Esophagus squamous epithelium (tissue), 5 donors: ENCODE measurements at regions of chr9 and their contacts with region 1.

Region 1: GRCh38 chr9:33623658-33624586 is 99.9 kb downstream of the ANKRD18B start:
- DNase-seq: no peak
- H3K4me3 ChIP-seq: no peak overlapping the region
- H3K27ac ChIP-seq: no peak overlapping the region
- H3K4me1 ChIP-seq: peaks cover 0 to 27% (median 4%) of the 10 kb centered on the region in 3 donors
- H3K27me3 ChIP-seq: peaks cover 0 to 23% (median 0%) of the 10 kb centered on the region in 4 donors
- CTCF ChIP-seq: peak; percentile 76 to 92 (median 84)
- POLR2A ChIP-seq: no peak

Region 2: DNA sequence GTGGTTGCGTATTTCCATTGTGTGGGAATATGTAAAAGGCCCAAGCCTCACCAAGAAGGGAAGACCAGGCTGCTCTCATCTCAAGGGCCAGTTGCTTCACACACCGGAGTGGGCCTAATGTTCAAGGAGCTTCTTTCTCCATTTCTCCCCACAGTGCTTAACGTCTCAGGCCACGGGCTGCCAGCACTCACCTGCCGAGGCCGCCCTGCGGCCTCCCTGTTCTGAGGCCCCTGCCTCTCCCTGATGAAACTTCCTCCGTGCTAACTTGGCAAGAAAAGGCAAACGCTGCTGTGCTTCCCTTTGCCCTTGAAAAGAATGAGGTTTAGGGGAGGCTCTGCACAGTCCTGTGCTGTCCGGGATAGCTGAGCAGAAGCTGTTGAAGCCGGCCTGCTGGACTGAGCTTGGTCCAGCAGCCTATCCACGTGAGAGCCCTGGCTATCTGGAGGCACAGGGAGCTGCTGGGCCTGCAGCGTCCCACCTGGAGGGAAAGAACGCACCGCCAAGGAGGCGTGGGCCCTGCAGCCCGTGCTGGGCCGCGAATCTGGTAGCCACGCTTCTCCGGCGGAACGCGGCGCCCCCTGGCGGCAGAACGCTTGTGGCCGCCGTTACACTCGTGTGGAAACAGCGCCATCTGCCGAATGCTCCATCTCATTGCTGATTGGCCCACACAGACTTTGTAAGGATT is 97.9 kb after region 1 on chr9:
- intact Hi-C with region 1: loop called (anchors 5 kb)
- DNase-seq: no peak
- H3K4me3 ChIP-seq: no peak overlapping the region
- H3K27ac ChIP-seq: no peak overlapping the region
- H3K4me1 ChIP-seq: peaks cover 0 to 6% (median 0%) of the 10 kb centered on the region in 3 donors
- H3K27me3 ChIP-seq: peaks cover 0 to 4% (median 0%) of the 10 kb centered on the region in 4 donors
- CTCF ChIP-seq: peak; percentile 99 to 100 (median 100)
- POLR2A ChIP-seq: no peak

Region 3: GRCh38 chr9:33813712-33814641 is 190.1 kb after region 1 on chr9:
- intact Hi-C with region 1: no loop called
- DNase-seq: no peak
- H3K4me3 ChIP-seq: no peak overlapping the region
- H3K27ac ChIP-seq: peak overlapping the region; percentile 40 to 100 (median 98)
- H3K4me1 ChIP-seq: peaks cover 19 to 43% (median 31%) of the 10 kb centered on the region in 3 donors
- H3K27me3 ChIP-seq: no peaks in the 10 kb centered on the region
- CTCF ChIP-seq: peak; percentile 30 to 82 (median 71)
- POLR2A ChIP-seq: no peak